AG04450 (cell line): ENCODE measurements at regions of chr6 and their contacts with region 1.

Region 1: DNA sequence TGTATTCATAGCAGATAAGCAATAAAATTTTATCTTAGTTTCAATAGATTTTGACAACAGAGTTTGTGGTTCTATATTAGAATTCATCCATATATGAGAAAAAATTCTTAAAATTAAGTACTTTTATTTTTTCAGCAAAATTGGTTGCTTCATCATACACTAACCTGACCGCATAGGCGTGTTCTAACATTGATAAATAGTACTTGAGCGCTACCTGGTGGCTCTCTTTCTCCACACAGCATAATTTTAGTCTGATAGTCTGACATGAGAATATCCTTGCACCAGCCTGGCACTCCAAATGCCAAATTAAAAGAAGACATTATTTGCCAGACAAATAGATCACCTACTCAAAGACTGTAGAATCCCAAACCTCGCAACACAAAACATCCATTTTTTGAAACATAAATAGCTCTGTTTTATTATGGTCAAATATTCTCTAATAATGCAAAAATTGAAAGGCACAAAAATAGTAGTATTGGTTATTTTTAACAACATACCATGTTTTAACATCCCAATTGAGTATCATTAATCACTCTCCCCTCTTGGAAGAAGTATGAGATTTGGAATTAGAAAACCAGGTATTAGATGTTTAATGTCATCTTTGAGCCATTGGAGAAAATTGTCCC is 33.0 kb upstream of the FILIP1 start:
- DNase-seq: peak; percentile 34
- H3K4me3 ChIP-seq: no peak overlapping the region
- H3K27ac ChIP-seq: no peak overlapping the region
- H3K27me3 ChIP-seq: no peaks in the 10 kb centered on the region
- CTCF ChIP-seq: peak; percentile 75

Region 2: DNA sequence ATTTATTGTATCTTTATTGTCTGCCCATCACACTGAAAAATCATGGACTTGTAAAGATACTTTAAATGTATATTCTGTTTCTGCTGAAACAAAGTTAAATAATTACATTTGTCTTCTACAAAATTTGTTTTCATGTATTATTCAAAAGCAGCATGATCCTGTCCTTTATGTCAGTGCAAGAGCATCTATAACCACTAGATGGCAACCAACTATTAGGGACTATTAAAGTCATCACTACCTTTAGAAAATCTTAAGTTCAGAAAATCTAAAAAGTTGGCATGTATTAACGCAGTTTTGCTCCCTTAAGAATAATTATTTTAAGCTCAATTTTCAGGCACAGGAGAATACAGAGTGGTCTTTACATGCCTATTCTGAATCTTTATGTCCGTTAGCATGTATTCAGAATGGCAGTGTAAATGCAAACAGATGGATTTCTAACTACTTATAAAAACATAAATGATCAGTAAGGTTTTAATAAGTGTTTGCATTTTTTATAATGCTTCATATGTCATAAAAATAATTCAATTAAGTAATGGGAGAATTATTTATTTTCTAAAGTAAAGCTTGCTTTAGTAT is 259.8 kb before region 1 on chr6:
- CTCF ChIA-PET with region 1: interaction called, 74 read pairs
- POLR2A ChIA-PET with region 1: no interaction called
- DNase-seq: no peak
- H3K4me3 ChIP-seq: no peak overlapping the region
- H3K27ac ChIP-seq: no peak overlapping the region
- H3K27me3 ChIP-seq: no peaks in the 10 kb centered on the region
- CTCF ChIP-seq: peak; percentile 86

Region 3: DNA sequence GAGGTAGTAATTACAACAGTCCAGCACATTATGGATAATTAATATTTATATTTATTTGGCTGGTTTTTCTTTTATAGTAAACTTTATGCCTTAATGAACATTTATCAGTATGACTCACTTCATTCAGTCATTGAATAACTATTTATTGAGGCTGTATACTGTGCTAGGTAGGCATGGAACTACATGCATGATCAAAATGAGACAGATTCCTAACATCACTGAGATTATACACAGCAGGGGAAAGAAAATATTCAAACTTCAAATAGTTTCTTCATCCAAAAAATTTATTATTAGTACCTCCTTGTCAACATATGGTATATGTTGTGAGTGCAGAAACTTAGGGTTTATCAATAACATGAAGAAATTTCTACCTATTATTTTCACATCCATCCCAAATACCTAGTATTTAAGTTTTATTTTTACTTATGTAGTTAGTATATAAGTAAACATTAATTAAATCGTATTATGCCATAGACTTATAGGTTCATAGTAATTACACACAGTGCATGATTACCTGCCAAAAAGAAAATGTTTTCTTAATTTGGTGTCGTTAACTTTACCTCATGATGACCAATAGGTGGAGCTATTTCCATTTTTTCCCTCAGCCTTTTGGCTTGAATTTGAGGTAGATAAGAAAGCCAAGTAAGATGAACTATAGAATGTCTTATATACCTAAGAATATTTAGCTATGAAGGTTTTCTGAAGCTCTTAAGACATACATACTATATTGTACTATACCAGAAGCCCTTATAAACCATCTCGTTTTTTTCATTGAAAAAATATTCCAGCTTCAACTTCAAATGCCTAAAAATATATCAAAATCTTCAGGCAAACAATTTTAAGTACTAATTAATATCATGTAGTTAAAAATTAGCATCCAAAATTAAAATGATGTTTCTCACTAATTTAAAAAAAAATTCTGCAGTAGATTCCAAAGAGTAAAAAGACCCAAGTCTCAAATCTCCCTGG is 229.5 kb before region 1 on chr6:
- CTCF ChIA-PET with region 1: interaction called, 47 read pairs
- POLR2A ChIA-PET with region 1: interaction called, 9 read pairs
- DNase-seq: no peak
- H3K4me3 ChIP-seq: no peak overlapping the region
- H3K27ac ChIP-seq: no peak overlapping the region
- H3K27me3 ChIP-seq: no peaks in the 10 kb centered on the region
- CTCF ChIP-seq: peak; percentile 73

Region 4: GRCh38 chr6:75504465-75505228 is 22.0 kb before region 1 on chr6:
- CTCF ChIA-PET with region 1: interaction called, 10 read pairs
- POLR2A ChIA-PET with region 1: no interaction called
- DNase-seq: no peak
- H3K4me3 ChIP-seq: no peak overlapping the region
- H3K27ac ChIP-seq: no peak overlapping the region
- H3K27me3 ChIP-seq: no peaks in the 10 kb centered on the region
- CTCF ChIP-seq: 0 out of 2 replicates have a peak, but pooled peaks have one; percentile 19

Region 5: DNA sequence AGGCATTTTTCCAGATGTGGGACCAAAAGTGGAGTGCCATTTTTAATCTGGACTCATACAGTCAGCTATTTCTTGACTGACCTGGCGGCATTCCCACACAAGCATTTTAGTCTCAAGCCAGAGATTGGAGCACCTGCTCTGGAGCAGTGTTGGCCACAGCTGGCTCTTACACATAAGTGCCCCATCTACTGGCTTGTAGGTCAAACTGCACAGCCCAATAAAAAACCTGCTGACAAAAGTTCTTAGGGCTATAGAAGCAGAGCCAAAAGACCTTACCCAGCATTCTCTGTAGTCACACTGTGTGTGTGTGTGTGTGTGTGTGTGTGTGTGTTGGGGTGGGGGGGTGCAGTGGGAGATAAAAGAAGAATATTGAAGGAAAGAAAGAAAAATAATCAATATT is 36.4 kb after region 1 on chr6:
- CTCF ChIA-PET with region 1: interaction called, 13 read pairs
- POLR2A ChIA-PET with region 1: no interaction called
- DNase-seq: no peak
- H3K4me3 ChIP-seq: no peak overlapping the region
- H3K27ac ChIP-seq: no peak overlapping the region
- H3K27me3 ChIP-seq: peaks cover 14% of the 10 kb centered on the region
- CTCF ChIP-seq: peak; percentile 58

Region 6: GRCh38 chr6:76240092-76240491 is 713.5 kb after region 1 on chr6:
- CTCF ChIA-PET with region 1: no interaction called
- POLR2A ChIA-PET with region 1: no interaction called
- DNase-seq: no peak
- H3K4me3 ChIP-seq: no peak overlapping the region
- H3K27ac ChIP-seq: no peak overlapping the region
- H3K27me3 ChIP-seq: no peaks in the 10 kb centered on the region
- CTCF ChIP-seq: no peak